Heart right ventricle (tissue), 16 donors: ENCODE measurements at regions of chr2 and their contacts with region 1.

Region 1: DNA sequence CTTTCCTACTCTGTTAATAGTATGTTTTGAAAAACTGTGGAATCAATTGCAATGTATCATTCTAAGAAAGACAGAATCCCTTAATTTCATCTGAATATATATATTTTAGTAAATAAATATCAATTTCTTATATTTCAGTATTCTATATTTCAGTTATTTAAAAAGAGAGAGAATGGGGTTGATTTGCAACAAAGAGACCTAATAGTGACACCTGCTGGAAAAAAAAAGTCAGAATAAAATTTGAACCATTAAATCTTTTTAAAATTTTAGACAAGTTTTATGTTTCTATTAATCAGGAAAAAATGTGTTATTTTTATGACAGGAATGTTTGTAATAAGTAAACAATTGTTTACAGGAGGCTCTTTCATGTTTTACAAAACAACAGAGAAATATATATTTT is 20.7 kb upstream of the CCNT2 start:
- DNase-seq: no peak
- ATAC-seq: no peak
- H3K4me3 ChIP-seq: no peak overlapping the region
- H3K27ac ChIP-seq: no peak overlapping the region
- H3K4me1 ChIP-seq: no peaks in the 10 kb centered on the region
- H3K27me3 ChIP-seq: no peaks in the 10 kb centered on the region
- CTCF ChIP-seq: peak in 8 of 9 donors; percentile 14 to 71 (median 55)

Region 2: DNA sequence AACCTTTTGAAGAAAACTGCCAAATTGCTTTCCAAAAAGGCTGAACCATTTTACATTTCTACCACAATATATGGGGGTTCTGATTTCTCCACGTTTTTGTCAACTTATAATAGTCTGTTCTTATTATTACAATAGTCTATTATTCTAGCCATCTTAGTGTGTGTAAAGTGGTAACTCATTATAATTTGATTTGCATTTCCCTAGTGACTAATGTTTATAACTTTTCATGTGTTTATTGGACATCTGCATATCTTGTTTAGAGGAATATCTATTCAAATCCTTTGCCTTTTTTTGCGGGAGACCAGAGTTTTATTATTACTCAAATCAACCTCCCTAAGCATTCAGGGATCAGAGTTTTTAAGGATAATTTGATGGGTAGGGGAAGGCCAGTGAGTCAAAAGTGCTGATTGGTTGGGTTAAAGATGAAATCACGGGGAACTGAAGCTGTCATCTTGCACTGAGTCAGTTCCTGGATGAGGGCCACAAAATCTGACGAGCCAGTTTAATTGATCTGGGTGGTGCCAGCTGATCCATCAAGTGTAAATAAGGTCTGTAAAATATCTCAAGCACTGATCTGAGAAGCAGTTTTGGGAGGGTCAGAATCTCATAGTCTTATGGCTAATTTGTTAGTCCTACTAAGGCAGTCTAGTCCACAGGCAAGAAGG is 1026.3 kb before region 1 on chr2:
- intact Hi-C with region 1: loop called in 1 of 10 experiments (anchors 5 kb)
- DNase-seq: no peak
- ATAC-seq: no peak
- H3K4me3 ChIP-seq: no peak overlapping the region
- H3K27ac ChIP-seq: no peak overlapping the region
- H3K4me1 ChIP-seq: no peaks in the 10 kb centered on the region
- H3K27me3 ChIP-seq: peaks cover 0 to under 1% (median 0%) of the 10 kb centered on the region in 7 donors
- CTCF ChIP-seq: no peak

Region 3: GRCh38 chr2:134454931-134455330 is 443.0 kb before region 1 on chr2:
- intact Hi-C with region 1: loop called (anchors 2 to 5 kb)
- DNase-seq: no peak
- ATAC-seq: peak in 1 of 8 donors; percentile 15
- H3K4me3 ChIP-seq: no peak overlapping the region
- H3K27ac ChIP-seq: no peak overlapping the region
- H3K4me1 ChIP-seq: peaks cover 0 to 16% (median 0%) of the 10 kb centered on the region in 9 donors
- H3K27me3 ChIP-seq: no peaks in the 10 kb centered on the region
- CTCF ChIP-seq: no peak

Region 4: GRCh38 chr2:134460583-134460998 is 437.3 kb before region 1 on chr2:
- intact Hi-C with region 1: loop called (anchors 2 to 5 kb)
- DNase-seq: peak; percentile 35 to 46
- ATAC-seq: peak; percentile 51 to 85 (median 76)
- H3K4me3 ChIP-seq: no peak overlapping the region
- H3K27ac ChIP-seq: no peak overlapping the region
- H3K4me1 ChIP-seq: peaks cover 0 to 9% (median 0%) of the 10 kb centered on the region in 9 donors
- H3K27me3 ChIP-seq: no peaks in the 10 kb centered on the region
- CTCF ChIP-seq: peak; percentile 23 to 74 (median 65)

Region 5: GRCh38 chr2:134466141-134466540 is 431.8 kb before region 1 on chr2:
- intact Hi-C with region 1: loop called (anchors 2 to 5 kb)
- DNase-seq: no peak
- ATAC-seq: no peak
- H3K4me3 ChIP-seq: no peak overlapping the region
- H3K27ac ChIP-seq: no peak overlapping the region
- H3K4me1 ChIP-seq: peaks cover 0 to 6% (median 0%) of the 10 kb centered on the region in 9 donors
- H3K27me3 ChIP-seq: no peaks in the 10 kb centered on the region
- CTCF ChIP-seq: peak in 8 of 9 donors; percentile 7 to 47 (median 35)

Region 6: DNA sequence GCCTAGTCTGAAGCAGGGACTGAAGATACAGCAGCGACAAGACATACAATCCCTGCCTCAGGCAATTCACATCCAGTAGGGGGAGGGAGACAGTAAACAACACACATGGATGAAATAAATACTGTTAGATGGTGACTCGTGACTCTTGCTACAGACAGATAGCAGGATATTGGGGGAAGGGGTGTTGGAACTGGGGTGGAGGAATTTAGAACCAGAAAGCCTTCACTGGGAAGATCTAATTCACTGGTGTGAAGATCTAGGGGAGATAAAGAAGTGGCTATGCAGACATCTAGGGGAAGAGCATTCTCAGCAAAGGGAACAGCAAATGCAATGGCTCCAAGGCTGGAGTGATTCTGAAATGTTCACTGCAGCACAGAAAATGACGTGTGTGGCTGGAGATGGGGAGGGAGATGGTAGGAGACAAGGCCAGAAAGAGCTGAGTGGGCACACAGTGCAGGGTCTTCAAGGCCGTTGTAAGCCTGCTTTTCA is 126.6 kb before region 1 on chr2:
- intact Hi-C with region 1: no loop called
- DNase-seq: no peak
- ATAC-seq: no peak
- H3K4me3 ChIP-seq: no peak overlapping the region
- H3K27ac ChIP-seq: no peak overlapping the region
- H3K4me1 ChIP-seq: peaks cover 2 to 30% (median 20%) of the 10 kb centered on the region in 9 donors
- H3K27me3 ChIP-seq: no peaks in the 10 kb centered on the region
- CTCF ChIP-seq: no peak

Region 7: DNA sequence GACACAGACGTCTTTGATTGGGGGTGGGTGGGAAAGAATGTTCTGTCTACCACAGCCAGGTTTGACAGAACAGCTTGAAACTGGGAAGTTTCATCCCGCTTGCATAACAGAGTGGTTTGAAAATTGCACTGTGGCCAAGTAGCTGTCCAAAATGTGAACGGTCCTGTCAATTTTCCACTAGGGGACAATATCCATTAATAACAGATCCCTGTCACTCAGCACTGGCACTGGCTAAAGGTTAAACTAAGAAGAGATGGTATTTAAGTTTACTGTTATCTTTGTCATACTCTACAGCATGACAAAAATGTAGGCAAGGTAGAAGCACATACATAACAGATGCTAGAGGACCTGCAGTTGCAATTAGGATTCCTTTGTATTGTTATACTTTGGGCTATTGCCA is 115.1 kb before region 1 on chr2:
- intact Hi-C with region 1: loop called in 1 of 10 experiments (anchors 10 kb)
- DNase-seq: no peak
- ATAC-seq: peak in 4 of 8 donors; percentile 22 to 44 (median 38)
- H3K4me3 ChIP-seq: no peak overlapping the region
- H3K27ac ChIP-seq: no peak overlapping the region
- H3K4me1 ChIP-seq: peaks cover 0 to 24% (median 0%) of the 10 kb centered on the region in 9 donors
- H3K27me3 ChIP-seq: no peaks in the 10 kb centered on the region
- CTCF ChIP-seq: peak in 5 of 9 donors; percentile 15 to 42 (median 34)